WTC11 (cell line): ENCODE measurements at regions of chr5 and their contacts with region 1.

Region 1: GRCh38 chr5:132238169-132238744 is 10.6 kb upstream of the P4HA2 start:
- DNase-seq: peak; percentile 89
- ATAC-seq: peak; percentile 95
- H3K4me3 Mint-ChIP-seq: no peak overlapping the region
- H3K27ac Mint-ChIP-seq: no peak overlapping the region
- H3K4me1 Mint-ChIP-seq: no peaks in the 10 kb centered on the region
- H3K27me3 Mint-ChIP-seq: no peaks in the 10 kb centered on the region; the same call in 1 of the 2 replicates
- CTCF ChIP-seq: peak; percentile 78

Region 2: DNA sequence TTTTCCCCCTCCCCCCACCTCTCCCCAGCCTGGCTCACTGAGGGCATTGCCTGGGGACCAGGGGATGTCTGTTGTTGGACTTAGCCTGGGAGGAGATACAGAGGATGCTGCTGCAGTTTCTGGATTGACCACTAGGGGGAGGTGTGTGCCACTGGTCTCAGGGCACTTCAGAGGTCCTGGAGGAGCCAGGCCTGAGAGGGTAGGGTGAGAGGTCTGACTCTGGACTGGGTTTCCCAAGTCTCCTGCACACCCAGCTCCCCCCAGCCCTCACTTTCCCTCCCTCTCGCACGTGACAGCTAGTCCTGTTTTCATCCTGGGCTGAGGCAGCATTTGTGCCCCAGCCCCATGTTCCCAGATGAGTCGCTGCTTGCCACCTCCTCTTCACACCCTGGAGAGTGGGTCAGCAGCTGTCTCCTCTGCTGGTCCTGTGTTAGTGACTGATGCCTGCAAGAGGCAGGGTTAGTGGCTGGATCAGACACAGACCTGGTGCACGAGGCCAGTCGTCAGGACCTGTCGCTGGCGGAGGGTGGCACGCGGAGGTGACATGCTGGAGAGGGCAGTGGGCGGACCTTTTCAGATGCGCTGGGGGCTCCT is 173.4 kb before region 1 on chr5:
- CTCF ChIA-PET with region 1: interaction called, 12 read pairs
- POLR2A ChIA-PET with region 1: no interaction called
- DNase-seq: peak; percentile 92
- ATAC-seq: peak; percentile 82
- H3K4me3 Mint-ChIP-seq: no peak overlapping the region
- H3K27ac Mint-ChIP-seq: no peak overlapping the region
- H3K4me1 Mint-ChIP-seq: peaks cover 14% of the 10 kb centered on the region
- H3K27me3 Mint-ChIP-seq: no peaks in the 10 kb centered on the region
- CTCF ChIP-seq: peak; percentile 98

Region 3: DNA sequence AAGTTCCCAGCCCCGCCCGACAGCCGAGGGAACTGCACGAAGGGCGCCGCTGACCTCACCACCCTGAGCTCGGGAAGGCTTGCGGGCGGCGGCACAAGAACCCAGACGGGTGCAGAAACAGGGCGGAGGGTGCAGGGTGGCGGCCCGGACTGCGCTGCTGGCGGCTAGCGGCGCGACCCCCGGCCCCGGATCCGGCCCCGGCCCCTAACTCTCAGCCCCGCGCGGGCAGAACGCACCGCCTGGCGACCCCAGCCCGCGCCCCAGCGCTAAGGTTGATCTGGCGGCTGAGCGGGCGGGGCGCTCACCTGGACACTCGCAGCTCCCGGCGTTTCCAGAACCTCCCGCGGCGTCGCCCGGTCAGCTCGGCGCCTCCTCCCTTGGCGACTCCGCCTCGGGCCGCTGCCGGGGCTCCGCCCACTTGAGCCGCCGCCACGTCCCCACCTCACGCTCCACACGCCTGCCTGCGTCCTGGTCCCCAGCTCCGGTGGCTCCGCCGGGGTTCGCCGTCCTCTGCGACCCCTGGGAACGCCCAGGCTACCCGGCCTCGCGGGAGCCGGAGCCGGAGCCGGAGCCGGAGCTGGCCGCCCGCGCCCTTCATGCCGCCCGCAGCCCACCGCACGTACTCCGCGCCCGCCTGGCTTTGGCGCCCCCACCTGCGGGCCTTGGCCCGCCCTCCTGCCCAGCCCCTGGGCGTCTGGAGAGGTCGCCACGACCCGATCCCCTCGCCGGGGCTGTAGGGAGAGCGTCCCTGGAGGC is 10.6 kb before region 1 on chr5 and contains the start of gene P4HA2:
- CTCF ChIA-PET with region 1: interaction called, 55 read pairs
- POLR2A ChIA-PET with region 1: interaction called, 4 read pairs
- DNase-seq: peak; percentile 76
- ATAC-seq: peak; percentile 82
- H3K4me3 Mint-ChIP-seq: peak within 1 kb of the TSS; percentile 66
- H3K27ac Mint-ChIP-seq: no peak within 1 kb of the TSS
- H3K4me1 Mint-ChIP-seq: peaks cover 23% of the 10 kb centered on the region
- H3K27me3 Mint-ChIP-seq: peaks cover 41% of the 10 kb centered on the region
- CTCF ChIP-seq: no peak
- total RNA-seq, gene P4HA2: 15.1 to 19.0 TPM (median 17.8 TPM) in 3 replicates

Region 4: GRCh38 chr5:132272311-132273210 is 34.3 kb after region 1 on chr5:
- CTCF ChIA-PET with region 1: interaction called, 37 read pairs
- POLR2A ChIA-PET with region 1: no interaction called
- DNase-seq: peak; percentile 89
- ATAC-seq: peak; percentile 65
- H3K4me3 Mint-ChIP-seq: no peak overlapping the region
- H3K27ac Mint-ChIP-seq: peak overlapping the region; percentile 16; the same call in 1 of the 2 replicates
- H3K4me1 Mint-ChIP-seq: peaks cover 16% of the 10 kb centered on the region
- H3K27me3 Mint-ChIP-seq: peaks cover 2% of the 10 kb centered on the region; the same call in 1 of the 2 replicates
- CTCF ChIP-seq: peak; percentile 85

Region 5: DNA sequence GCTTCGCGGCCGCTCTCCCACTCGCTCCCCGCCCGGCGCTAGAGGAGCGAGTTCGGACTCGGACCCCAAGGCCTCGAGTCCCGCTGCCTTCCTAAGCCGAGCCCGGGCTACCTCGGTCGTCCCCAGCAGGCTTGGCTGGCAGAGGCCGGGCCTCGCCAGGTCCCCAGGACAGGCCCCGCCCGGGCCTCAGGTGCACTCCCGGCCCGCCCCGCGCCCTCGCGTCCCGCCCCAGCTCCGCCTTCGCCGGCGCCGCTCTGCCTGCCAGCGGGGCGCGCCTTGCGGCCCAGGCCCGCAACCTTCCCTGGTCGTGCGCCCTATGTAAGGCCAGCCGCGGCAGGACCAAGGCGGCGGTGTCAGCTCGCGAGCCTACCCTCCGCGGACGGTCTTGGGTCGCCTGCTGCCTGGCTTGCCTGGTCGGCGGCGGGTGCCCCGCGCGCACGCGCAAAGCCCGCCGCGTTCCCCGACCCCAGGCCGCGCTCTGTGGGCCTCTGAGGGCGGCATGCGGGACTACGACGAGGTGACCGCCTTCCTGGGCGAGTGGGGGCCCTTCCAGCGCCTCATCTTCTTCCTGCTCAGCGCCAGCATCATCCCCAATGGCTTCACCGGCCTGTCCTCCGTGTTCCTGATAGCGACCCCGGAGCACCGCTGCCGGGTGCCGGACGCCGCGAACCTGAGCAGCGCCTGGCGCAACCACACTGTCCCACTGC is 131.4 kb after region 1 on chr5 and contains the start of gene SLC22A5:
- CTCF ChIA-PET with region 1: interaction called, 12 read pairs
- POLR2A ChIA-PET with region 1: no interaction called
- DNase-seq: peak; percentile 80
- ATAC-seq: peak; percentile 96
- H3K4me3 Mint-ChIP-seq: peak within 1 kb of the TSS; percentile 69
- H3K27ac Mint-ChIP-seq: no peak within 1 kb of the TSS
- H3K4me1 Mint-ChIP-seq: peaks cover 9% of the 10 kb centered on the region
- H3K27me3 Mint-ChIP-seq: peaks cover 16% of the 10 kb centered on the region
- CTCF ChIP-seq: no peak
- total RNA-seq, gene SLC22A5: 3.6 to 4.9 TPM (median 4.4 TPM) in 3 replicates

Region 6: GRCh38 chr5:132500931-132501630 is 262.8 kb after region 1 on chr5:
- CTCF ChIA-PET with region 1: interaction called, 13 read pairs
- POLR2A ChIA-PET with region 1: no interaction called
- DNase-seq: peak; percentile 68
- ATAC-seq: peak; percentile 20
- H3K4me3 Mint-ChIP-seq: no peak overlapping the region
- H3K27ac Mint-ChIP-seq: peak overlapping the region; percentile 72; the same call in 1 of the 2 replicates
- H3K4me1 Mint-ChIP-seq: peaks cover 10% of the 10 kb centered on the region
- H3K27me3 Mint-ChIP-seq: no peaks in the 10 kb centered on the region; the same call in 1 of the 2 replicates
- CTCF ChIP-seq: peak; percentile 86

Region 7: GRCh38 chr5:133273661-133274596 is 1035.7 kb after region 1 on chr5:
- CTCF ChIA-PET with region 1: no interaction called
- POLR2A ChIA-PET with region 1: no interaction called
- DNase-seq: no peak
- ATAC-seq: no peak; the same call in 1 of the 2 replicates
- H3K4me3 Mint-ChIP-seq: no peak overlapping the region
- H3K27ac Mint-ChIP-seq: no peak overlapping the region
- H3K4me1 Mint-ChIP-seq: no peaks in the 10 kb centered on the region
- H3K27me3 Mint-ChIP-seq: no peaks in the 10 kb centered on the region
- CTCF ChIP-seq: no peak